Left lung (tissue), 14 donors: ENCODE measurements at regions of chr20 and their contacts with region 1.

Region 1: GRCh38 chr20:5569021-5569420 is 181.2 kb upstream of the SHLD1 start:
- DNase-seq: peak in 2 of 4 donors; percentile 32 to 69
- ATAC-seq: peak; percentile 78
- H3K4me3 ChIP-seq: no peak overlapping the region
- H3K27ac ChIP-seq: peak overlapping the region in 1 of 2 donors; percentile 84
- H3K4me1 ChIP-seq: peaks cover 0 to 32% of the 10 kb centered on the region in 2 donors
- H3K27me3 ChIP-seq: no peaks in the 10 kb centered on the region
- CTCF ChIP-seq: no peak

Region 2: GRCh38 chr20:5788385-5788895 is 219.4 kb after region 1 on chr20:
- intact Hi-C with region 1: loop called in 1 of 2 experiments (anchors 10 kb)
- DNase-seq: peak in 3 of 4 donors; percentile 72 to 88 (median 77)
- ATAC-seq: peak; percentile 95
- H3K4me3 ChIP-seq: no peak overlapping the region
- H3K27ac ChIP-seq: no peak overlapping the region
- H3K4me1 ChIP-seq: peaks cover 0 to 26% of the 10 kb centered on the region in 2 donors
- H3K27me3 ChIP-seq: no peaks in the 10 kb centered on the region
- CTCF ChIP-seq: peak; percentile 85